AG04450 (cell line): ENCODE measurements at regions of chr17 and their contacts with region 1.

Region 1: DNA sequence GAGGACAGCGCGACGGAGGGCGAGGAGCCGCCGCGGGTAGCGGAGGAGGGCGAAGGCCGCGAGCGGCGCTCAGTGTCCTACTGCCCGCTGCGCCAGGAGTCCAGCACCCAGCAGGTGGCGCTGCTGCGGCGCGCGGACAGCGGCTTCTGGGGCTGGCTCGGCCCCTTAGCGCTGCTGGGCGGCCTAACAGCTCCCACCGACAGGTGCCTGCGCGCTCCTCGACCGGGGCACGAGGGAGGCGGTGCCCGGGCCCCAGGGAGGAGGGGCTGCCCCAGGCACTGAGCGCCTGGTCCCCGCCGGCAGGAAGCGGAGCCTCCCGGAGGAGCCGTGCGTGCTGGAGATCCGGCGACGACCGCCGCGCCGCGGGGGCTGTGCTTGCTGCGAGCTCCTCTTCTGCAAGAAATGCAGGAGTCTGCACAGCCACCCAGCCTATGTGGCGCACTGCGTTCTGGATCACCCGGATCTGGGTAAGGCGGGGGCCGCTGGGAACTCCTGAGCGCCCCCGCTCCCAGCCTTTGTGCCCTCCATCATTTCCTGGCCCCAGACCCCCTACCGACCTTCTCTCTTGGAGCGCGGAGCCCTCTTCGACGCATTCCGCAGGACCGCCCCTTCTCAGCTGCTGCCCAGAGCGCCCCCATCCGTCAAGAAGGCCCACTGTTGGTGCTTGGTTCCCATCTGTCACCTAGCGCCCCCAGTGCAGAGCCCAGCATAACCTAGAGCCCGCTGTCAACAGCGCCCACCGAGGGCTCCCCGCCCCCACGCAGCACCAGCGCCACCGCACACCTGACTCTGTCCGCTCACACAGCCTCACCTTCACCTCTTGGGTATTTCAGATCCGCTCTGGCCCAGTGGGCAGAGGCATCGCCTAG is 3.7 kb downstream of the C17orf50 start:
- DNase-seq: no peak
- H3K4me3 ChIP-seq: peak overlapping the region; percentile 49
- H3K27ac ChIP-seq: no peak overlapping the region
- H3K27me3 ChIP-seq: peaks cover 34% of the 10 kb centered on the region
- CTCF ChIP-seq: peak; percentile 85

Region 2: DNA sequence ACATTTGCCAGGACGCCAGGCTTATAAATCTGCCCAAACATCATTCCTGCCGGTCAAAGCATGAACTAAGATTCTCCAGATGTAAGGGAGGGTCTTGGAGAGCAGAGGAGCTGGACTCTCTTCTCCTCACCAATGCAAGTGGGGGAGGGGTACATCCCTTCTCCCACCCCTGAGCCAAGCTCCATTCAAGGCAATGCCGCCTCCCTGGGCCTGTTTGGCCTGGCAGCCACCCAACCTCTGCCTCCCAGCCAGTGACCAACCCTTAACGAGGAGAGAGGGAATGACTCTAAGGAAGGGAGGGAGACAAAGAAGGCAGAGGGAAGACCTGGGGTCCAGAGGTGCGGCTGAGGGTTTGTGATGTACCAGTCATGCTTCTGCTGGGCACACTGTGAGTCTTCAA is 10.1 kb after region 1 on chr17:
- CTCF ChIA-PET with region 1: interaction called, 45 read pairs
- POLR2A ChIA-PET with region 1: no interaction called
- DNase-seq: no peak
- H3K4me3 ChIP-seq: no peak overlapping the region
- H3K27ac ChIP-seq: no peak overlapping the region
- H3K27me3 ChIP-seq: peaks cover 19% of the 10 kb centered on the region
- CTCF ChIP-seq: no peak

Region 3: DNA sequence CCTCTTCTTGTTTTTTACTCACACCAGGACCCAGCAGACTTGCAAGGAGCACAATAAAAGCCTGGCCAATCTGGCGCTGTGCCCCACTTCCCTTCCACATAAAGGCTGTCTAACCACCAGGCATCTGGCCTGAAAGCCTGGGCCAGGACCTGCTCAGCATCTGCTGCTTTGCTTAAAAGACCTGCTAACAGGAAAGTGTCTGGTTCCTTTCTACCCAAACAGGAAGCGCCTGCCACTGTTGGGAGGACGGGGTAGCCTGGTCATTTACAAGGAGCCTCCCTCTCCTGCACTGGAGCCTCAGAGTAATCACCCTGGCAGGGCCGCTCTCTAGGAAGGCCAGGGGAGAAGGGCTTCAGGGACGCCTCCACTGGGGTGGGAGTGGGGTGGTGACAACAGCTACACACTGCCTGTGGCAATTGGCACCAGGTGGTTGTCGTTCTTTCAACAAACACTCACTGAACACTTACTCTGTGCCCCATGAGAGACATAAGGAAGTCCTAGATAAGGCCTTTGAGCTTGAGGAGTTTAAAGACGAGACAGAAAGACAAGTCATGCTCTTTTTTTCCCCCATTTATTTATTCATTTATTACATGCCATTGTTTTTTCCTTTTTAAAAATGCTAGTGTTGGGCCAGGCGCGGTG is 37.3 kb after region 1 on chr17:
- CTCF ChIA-PET with region 1: interaction called, 478 read pairs
- POLR2A ChIA-PET with region 1: interaction called, 9 read pairs
- DNase-seq: no peak
- H3K4me3 ChIP-seq: no peak overlapping the region
- H3K27ac ChIP-seq: no peak overlapping the region
- H3K27me3 ChIP-seq: peaks cover 22% of the 10 kb centered on the region
- CTCF ChIP-seq: no peak

Region 4: DNA sequence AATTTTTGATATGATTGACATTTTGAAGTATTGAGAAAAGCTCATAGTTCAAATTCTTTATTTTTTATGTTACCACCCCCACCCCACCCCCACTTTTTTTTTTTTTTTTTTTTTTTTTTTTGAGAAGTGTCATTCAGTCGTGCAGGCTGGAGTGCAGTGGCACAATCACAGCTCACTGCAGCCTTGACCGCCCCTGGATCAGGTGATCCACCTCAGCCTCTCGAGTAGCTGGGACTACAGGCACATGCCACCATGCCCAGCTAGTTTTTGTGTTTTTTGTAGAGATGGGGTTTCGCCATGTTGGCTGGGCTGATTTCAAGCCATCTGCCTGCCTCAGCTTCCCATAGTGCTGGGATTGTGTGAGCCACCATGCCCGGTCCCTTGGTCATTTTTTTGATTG is 52.4 kb after region 1 on chr17:
- CTCF ChIA-PET with region 1: interaction called, 478 read pairs
- POLR2A ChIA-PET with region 1: no interaction called
- DNase-seq: no peak
- H3K4me3 ChIP-seq: no peak overlapping the region
- H3K27ac ChIP-seq: no peak overlapping the region
- H3K27me3 ChIP-seq: no peaks in the 10 kb centered on the region
- CTCF ChIP-seq: no peak